ENCODE measurements at regions of chr7 and their contacts with region 1.

Region 1: DNA sequence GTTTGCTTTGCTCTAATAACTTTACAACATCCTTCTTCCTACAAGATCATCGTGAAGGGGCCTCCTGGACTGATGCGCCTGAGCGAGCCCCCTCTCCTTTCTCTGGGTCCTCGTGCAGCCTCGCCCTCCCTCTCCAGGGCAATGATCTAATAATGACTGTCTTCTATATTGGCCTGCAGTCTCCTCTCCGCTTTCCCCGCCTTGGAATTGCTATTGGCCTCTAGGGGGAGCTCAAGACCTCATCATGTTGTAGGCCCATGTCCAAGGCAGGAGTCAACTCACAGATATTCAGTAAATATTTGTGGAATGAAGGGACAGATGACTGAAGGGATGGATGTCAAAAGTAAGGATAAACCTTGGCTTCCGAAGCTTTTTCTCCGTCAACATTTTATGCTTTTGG is 1180.3 kb downstream of the TYW1 start:
- H3K4me3 Mint-ChIP-seq: no peak overlapping the region
- H3K27ac Mint-ChIP-seq: no peak overlapping the region
- H3K4me1 Mint-ChIP-seq: no peaks in the 10 kb centered on the region
- H3K27me3 Mint-ChIP-seq: no peaks in the 10 kb centered on the region

Region 2: DNA sequence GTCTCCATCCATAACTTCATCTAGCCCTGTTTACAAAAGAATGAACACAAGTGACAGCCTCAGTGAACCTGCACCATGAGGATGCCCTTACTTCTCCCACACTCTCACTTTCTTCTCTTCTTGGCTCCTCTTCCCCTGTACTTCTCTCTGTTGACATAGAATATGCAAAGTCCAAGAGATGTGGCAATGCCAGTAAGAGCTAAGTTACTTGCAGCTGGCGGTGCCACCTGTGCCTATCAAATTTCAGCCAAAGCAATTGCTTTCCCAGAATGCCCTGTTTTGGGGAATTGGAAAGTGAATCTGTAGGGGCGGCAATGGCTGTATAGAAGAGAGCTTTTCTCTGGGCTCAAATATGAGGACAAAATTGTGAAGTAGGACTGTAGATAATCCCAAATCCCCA is 1979.1 kb after region 1 on chr7:
- intact Hi-C with region 1: loop called (anchors 5 kb)
- H3K4me3 Mint-ChIP-seq: no peak overlapping the region
- H3K27ac Mint-ChIP-seq: no peak overlapping the region
- H3K4me1 Mint-ChIP-seq: peaks cover 5% of the 10 kb centered on the region
- H3K27me3 Mint-ChIP-seq: no peaks in the 10 kb centered on the region

Measured in dendritic cell treated with granulocyte-macrophage colony-stimulating factor and Interleukin-4, amounts not matched to agents 40 ng/mL and 50 ng/mL, for 4 days (primary cell).